HEK293 (cell line): ENCODE measurements at regions of chr17 and their contacts with region 1.

Region 1: DNA sequence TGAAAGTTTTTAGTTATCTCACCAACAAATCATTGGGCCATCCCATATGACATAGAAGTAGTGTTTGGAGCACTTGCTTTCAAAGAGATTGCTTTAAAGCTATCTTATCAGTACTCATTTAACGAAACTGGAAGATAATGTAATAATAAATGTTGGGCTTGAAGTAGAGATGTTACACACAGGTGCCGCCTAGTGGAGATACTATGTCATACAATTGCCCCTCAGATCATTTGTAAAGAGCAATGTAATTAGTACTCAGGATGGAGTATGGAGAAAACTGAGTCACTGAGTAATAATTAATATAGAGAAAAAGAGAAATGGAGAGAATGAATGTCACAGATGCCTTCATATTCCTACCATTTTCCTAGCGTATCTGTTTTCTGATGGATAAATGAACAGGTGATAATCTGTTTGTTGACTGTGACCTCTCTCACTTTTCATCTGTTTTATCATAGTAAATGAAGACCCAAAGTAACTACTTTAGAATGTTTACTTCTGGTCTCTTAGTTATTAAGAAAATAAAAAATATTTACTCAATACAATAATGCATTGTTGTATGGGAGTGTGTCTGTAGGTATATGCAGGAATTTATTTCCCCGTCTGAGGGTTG is 80.4 kb downstream of the EFCAB5 start:
- H3K4me3 ChIP-seq: no peak overlapping the region
- H3K27ac ChIP-seq: no peak overlapping the region
- H3K4me1 ChIP-seq: no peaks in the 10 kb centered on the region
- CTCF ChIP-seq: 0 out of 2 replicates have a peak, but pooled peaks have one; percentile 34

Region 2: GRCh38 chr17:29844339-29845048 is 177.3 kb before region 1 on chr17:
- CTCF ChIA-PET with region 1: no interaction called
- POLR2A ChIA-PET with region 1: no interaction called
- H3K4me3 ChIP-seq: no peak overlapping the region
- H3K27ac ChIP-seq: peak overlapping the region; percentile 61
- H3K4me1 ChIP-seq: peaks cover 20% of the 10 kb centered on the region
- CTCF ChIP-seq: no peak

Region 3: GRCh38 chr17:29941334-29941733 is 80.5 kb before region 1 on chr17 and contains the start of gene EFCAB5:
- CTCF ChIA-PET with region 1: interaction called, 13 read pairs
- POLR2A ChIA-PET with region 1: no interaction called
- H3K4me3 ChIP-seq: no peak within 1 kb of the TSS
- H3K27ac ChIP-seq: no peak within 1 kb of the TSS
- H3K4me1 ChIP-seq: no peaks in the 10 kb centered on the region
- CTCF ChIP-seq: no peak